ENCODE measurements at regions of chr19 and their contacts with region 1.

Region 1: GRCh38 chr19:41928221-41928683 is at the start of gene ERFL:
- DNase-seq: no peak
- H3K4me3 Mint-ChIP-seq: peak within 1 kb of the TSS; percentile 82
- H3K27ac Mint-ChIP-seq: peak within 1 kb of the TSS; percentile 83
- H3K4me1 Mint-ChIP-seq: peaks cover 19% of the 10 kb centered on the region
- H3K27me3 Mint-ChIP-seq: peaks cover 4% of the 10 kb centered on the region
- total RNA-seq, gene ERFL: 2.1 and 2.3 TPM in 2 replicates

Region 2: DNA sequence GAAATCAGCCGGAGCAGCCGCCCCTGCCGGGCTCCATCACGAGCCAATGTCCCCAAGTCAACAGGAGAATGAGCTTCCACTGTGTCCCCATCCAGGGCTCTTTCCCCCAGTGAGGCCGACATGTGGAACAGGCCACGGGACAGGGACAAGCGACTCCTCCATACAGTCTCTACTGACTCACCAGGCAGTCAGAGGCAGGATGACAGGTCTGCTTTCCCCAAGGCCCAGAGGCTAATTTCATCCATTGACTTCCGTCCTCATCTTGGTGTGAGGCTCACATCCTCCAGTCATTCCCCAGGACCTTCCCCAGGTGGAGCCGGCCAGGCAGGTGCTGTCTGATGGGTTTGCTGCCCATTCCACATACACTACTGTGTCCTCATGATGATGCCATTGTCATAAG is 169.4 kb before region 1 on chr19:
- intact Hi-C with region 1: no loop called
- DNase-seq: no peak
- H3K4me3 Mint-ChIP-seq: no peak overlapping the region
- H3K27ac Mint-ChIP-seq: no peak overlapping the region
- H3K4me1 Mint-ChIP-seq: peaks cover under 1% of the 10 kb centered on the region
- H3K27me3 Mint-ChIP-seq: peaks cover 37% of the 10 kb centered on the region

Region 3: GRCh38 chr19:41883821-41884733 is 44.2 kb before region 1 on chr19:
- intact Hi-C with region 1: loop called (anchors 2 kb)
- DNase-seq: peak; percentile 90
- H3K4me3 Mint-ChIP-seq: peak overlapping the region; percentile 81
- H3K27ac Mint-ChIP-seq: peak overlapping the region; percentile 94
- H3K4me1 Mint-ChIP-seq: peaks cover 45% of the 10 kb centered on the region
- H3K27me3 Mint-ChIP-seq: no peaks in the 10 kb centered on the region

Region 4: DNA sequence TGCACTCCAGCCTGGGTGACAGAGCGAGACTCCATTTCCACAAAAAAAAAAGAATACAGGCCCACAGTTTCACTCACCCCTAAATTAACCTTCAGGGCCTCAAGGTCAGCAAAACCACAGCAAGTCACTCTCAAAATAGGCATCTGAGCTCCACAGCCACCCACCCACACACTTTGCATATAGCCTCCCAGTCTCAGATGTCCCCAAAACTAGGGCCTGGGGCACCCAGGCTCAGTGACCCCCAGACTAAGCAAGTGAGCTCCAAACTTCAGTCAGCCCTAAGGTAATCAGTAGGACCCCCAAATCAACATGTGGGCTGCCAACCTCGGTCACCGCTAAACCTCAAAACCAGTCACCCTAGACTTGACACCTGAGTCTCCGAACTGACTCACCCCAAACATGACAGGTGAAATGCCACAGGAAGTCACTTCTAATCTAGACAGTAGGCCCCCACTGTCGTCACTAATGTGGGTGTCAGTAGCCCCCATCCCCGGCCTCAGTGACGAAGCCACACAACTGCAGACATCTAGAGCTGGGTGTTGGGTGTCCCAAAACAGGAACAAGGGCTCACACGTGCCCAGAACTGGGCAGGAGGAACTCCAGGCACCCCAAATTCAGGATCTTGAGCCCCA is 17.0 kb after region 1 on chr19:
- intact Hi-C with region 1: no loop called
- DNase-seq: peak; percentile 67
- H3K4me3 Mint-ChIP-seq: peak overlapping the region; percentile 13
- H3K27ac Mint-ChIP-seq: peak overlapping the region; percentile 97
- H3K4me1 Mint-ChIP-seq: peaks cover 44% of the 10 kb centered on the region
- H3K27me3 Mint-ChIP-seq: peaks cover 6% of the 10 kb centered on the region

Measured in activated T-helper 2 cell treated with anti-CD3 and anti-CD28 coated beads, Interferon-gamma antibody, Interleukin-2, Interleukin-4, amounts not matched to agents 10 μg/mL and 5 μg/mL and 100 μg/mL, durations not matched to agents 14 hours and 24 hours and 36 hours (primary cell).